Activated T-helper 1 cell treated with anti-CD3 and anti-CD28 coated beads, Interleukin-12 subunit alpha, Interleukin-12 subunit beta, Interleukin-2, Interleukin-4 antibody, amounts not matched to agents 30 ng/mL and 10 ng/mL and 1 ng/mL, durations not matched to agents 14 hours and 24 hours and 36 hours (primary cell): ENCODE measurements at regions of chr12 and their contacts with region 1.

Region 1: GRCh38 chr12:54958048-54958658 is 26.4 kb downstream of the TESPA1 start:
- DNase-seq: peak; percentile 28
- H3K4me3 Mint-ChIP-seq: peak overlapping the region; percentile 48
- H3K27ac Mint-ChIP-seq: peak overlapping the region; percentile 88
- H3K4me1 Mint-ChIP-seq: peaks cover 82% of the 10 kb centered on the region
- H3K27me3 Mint-ChIP-seq: no peaks in the 10 kb centered on the region

Region 2: GRCh38 chr12:54701940-54702592 is 256.1 kb before region 1 on chr12:
- intact Hi-C with region 1: loop called (anchors 1 kb)
- DNase-seq: no peak
- H3K4me3 Mint-ChIP-seq: no peak overlapping the region
- H3K27ac Mint-ChIP-seq: no peak overlapping the region
- H3K4me1 Mint-ChIP-seq: no peaks in the 10 kb centered on the region
- H3K27me3 Mint-ChIP-seq: peaks cover 10% of the 10 kb centered on the region

Region 3: GRCh38 chr12:54759751-54760150 is 198.4 kb before region 1 on chr12:
- intact Hi-C with region 1: loop called (anchors 1 kb)
- DNase-seq: no peak
- H3K4me3 Mint-ChIP-seq: no peak overlapping the region
- H3K27ac Mint-ChIP-seq: no peak overlapping the region
- H3K4me1 Mint-ChIP-seq: peaks cover 8% of the 10 kb centered on the region
- H3K27me3 Mint-ChIP-seq: peaks cover 12% of the 10 kb centered on the region

Region 4: GRCh38 chr12:54935235-54935951 is 22.8 kb before region 1 on chr12:
- intact Hi-C with region 1: loop called (anchors 1 kb)
- DNase-seq: peak; percentile 41
- H3K4me3 Mint-ChIP-seq: peak overlapping the region; percentile 62
- H3K27ac Mint-ChIP-seq: peak overlapping the region; percentile 99
- H3K4me1 Mint-ChIP-seq: peaks cover 42% of the 10 kb centered on the region
- H3K27me3 Mint-ChIP-seq: no peaks in the 10 kb centered on the region

Region 5: DNA sequence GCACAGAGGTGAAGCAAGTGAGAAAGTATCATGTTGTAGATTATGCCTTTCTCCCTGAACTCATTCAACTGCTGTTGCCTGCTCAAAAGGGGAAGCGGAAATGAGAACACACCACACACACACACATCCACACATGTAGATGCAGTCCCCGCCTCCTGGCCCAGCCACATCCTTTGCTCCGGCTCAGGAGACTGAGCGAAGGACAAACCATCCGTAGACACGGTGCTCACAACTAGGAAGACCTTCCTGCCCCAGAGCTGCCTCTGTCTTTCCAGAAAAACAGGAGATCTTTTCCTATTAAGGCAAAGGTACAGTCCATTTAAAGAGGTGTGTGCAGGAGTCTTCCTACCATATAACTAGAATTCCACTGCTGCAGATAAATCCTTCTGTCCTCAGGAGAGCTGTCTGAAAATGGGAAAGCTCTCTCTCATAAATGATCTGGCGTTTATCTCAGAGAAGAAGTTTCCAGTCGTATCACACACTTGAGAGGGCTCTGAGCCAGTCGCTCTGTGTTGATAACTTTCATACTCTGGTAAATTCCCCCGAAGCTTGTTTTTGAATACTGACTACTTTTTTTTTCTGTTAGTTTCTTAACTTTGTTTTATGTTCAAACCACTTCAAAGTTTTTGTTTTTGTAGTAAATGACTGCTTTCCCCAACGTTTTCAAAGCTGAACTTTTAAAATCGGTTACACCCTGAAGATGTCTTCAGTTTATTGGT is 26.7 kb after region 1 on chr12 and contains the start of gene TESPA1:
- intact Hi-C with region 1: loop called (anchors 1 kb)
- DNase-seq: peak; percentile 82
- H3K4me3 Mint-ChIP-seq: peak within 1 kb of the TSS; percentile 90
- H3K27ac Mint-ChIP-seq: peak within 1 kb of the TSS; percentile 90
- H3K4me1 Mint-ChIP-seq: peaks cover 79% of the 10 kb centered on the region
- H3K27me3 Mint-ChIP-seq: no peaks in the 10 kb centered on the region
- total RNA-seq, gene TESPA1: 179 and 181 TPM in 2 replicates

Region 6: DNA sequence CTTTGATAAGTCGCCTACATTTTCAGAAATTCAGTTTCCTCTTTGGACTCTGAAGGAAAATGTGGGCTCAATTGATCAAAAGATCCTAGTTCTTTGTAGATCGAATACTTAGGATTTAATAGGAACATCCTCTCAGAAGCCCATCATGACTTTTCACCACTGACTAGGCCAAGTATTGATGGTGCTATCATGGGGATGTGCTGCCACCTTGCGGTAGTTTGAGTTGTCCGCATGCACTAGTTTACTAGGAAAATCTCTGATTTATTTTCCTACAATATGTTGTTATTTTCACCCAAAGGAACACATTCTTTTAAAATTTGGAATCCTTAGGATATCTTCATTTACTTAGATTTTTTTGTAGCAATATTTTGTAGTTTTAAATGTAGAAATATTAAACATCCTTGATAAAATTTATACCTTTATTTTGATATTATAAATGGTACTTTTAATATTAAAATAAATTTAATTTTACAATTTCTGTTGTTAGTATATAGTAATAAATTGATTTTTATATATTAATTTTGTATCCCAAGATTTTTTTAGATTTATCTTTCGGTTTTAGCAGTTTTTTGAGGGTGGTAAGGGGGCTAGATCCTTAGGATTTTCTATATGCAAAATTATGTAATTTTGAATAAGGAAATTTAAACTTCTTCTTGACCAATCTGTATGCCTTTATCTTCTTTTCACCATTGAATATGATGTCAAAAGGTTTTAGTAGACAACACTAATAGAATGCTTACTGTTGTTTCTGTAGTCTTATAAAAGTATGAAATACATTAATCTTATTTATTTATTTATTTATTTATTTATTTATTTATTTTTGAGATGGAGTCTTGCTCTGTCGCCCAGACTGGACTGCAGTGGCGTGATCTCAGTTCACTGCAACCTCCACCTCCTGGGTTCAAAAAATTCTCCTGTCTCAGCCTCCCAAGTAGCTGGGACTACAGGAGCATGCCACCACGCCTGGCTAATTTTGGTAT is 115.2 kb after region 1 on chr12:
- intact Hi-C with region 1: loop called (anchors 1 kb)
- DNase-seq: peak; percentile 57
- H3K4me3 Mint-ChIP-seq: no peak overlapping the region
- H3K27ac Mint-ChIP-seq: no peak overlapping the region
- H3K4me1 Mint-ChIP-seq: peaks cover 11% of the 10 kb centered on the region
- H3K27me3 Mint-ChIP-seq: peaks cover 29% of the 10 kb centered on the region